HepG2 (cell line): ENCODE measurements at regions of chr17 and their contacts with region 1.

Region 1: GRCh38 chr17:8745586-8746500 is 1.2 kb upstream of the CCDC42 start:
- DNase-seq: peak; percentile 38
- ATAC-seq: peak; percentile 86
- H3K4me3 ChIP-seq: peak overlapping the region; percentile 52 to 70 (median 68); a peak in 5 of 6 replicates
- H3K27ac ChIP-seq: no peak overlapping the region
- H3K4me1 ChIP-seq: 0 out of 2 replicates have a peak, but pooled peaks cover 6% of the 10 kb centered on the region
- H3K27me3 ChIP-seq: peaks cover 1 to 30% of the 10 kb centered on the region in 2 experiments
- CTCF ChIP-seq: peak; percentile 86
- EP300 ChIP-seq: no peak
- POLR2A ChIP-seq: no peak
- RAD21 ChIP-seq: peak; percentile 91

Region 2: DNA sequence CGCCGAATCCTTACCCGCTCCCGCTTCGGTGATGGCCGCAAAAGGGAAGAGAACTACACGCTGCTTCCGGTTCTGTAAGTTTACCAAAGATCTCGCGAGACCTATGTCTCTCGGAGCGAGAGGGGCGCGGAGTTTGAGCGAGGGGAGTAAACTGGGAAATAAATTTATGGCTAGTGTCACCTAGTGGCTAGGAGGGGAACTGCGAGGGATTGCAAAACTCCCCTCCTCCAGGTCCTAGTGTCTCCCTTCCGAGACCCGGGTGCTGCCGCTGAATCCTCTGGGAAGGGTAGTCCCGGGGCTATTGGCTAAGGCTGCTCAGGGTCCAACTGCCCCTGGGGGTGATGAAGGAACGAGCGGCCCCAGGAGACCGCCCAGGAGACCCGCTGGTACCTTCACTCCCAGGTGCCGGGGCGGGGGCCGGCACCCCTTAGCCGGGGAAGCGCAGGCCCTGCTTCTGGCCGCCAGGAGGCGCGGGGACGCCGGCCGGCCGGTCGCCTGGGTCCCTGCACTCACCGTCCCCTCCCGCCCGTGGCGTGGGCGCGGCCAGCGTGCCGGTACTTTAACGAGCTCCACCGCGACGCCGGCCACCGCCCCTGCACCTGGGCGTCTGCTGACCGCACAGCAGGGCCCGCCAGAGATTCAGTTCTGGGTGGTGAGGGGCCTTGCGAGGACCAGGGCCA is 362.6 kb before region 1 on chr17 and contains the start of gene RPL26:
- CTCF ChIA-PET with region 1: interaction called, 7 read pairs
- POLR2A ChIA-PET with region 1: interaction called, 4 read pairs
- in situ Hi-C with region 1: no loop called
- intact Hi-C with region 1: loop called (anchors 2 kb)
- DNase-seq: peak; percentile 98
- ATAC-seq: peak; percentile 89
- H3K4me3 ChIP-seq: peak within 1 kb of the TSS; percentile 82 to 90 (median 87)
- H3K27ac ChIP-seq: peak within 1 kb of the TSS; percentile 64
- H3K4me1 ChIP-seq: peaks cover 53% of the 10 kb centered on the region
- H3K27me3 ChIP-seq: no peaks in the 10 kb centered on the region; a peak in 1 of 5 replicates
- CTCF ChIP-seq: peak; percentile 89
- EP300 ChIP-seq: peak in 1 of 2 experiments; percentile 28; a peak in 1 of 4 replicates
- POLR2A ChIP-seq: peak; percentile 96 to 97
- RAD21 ChIP-seq: peak; percentile 81; the same call in 1 of the 2 replicates
- total RNA-seq, gene RPL26: 2,817 and 3,645 TPM in 2 replicates

Region 3: DNA sequence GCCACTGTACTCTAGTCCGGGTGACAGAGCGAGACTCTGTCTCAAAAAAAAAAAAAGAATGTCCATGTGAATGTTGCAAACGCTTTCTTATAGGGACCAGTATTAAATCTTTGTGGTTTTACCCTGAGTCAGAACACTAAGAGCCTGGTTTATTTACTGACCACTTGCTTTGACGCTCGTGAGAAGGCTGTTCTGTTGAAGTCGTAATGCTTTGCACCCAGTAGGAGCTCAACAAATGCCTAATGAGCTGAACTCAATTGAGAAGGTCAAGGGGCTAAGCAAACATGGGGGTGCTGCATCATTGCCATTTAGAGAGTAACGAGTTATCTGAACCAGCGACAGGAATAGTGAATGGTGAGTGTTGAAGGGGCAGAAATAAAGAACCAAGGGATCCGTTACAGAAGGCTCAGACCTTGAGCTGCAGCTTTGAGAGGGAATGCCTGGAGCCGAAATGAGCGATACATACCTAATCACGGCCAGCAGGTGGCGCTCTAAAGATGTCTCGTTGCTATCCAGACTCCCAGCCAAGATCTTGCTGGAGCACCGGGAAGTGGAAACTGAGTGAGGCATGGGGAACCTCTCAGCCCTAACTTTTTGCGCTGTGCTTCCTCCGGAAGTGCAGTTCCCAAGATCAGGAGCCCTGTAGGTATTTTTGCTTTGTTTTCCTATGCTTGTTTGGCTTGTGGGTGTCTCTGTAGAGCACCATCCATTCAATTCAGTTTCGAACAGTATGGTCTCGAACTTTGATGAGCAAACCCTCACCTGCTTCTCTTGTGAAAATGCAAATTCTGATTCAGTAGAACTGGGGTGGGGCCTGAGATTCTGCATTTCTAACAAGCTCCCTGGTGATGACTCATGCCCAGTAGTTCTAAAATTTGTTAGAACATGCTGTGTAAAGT is 335.6 kb before region 1 on chr17:
- CTCF ChIA-PET with region 1: no interaction called
- POLR2A ChIA-PET with region 1: no interaction called
- in situ Hi-C with region 1: loop called (anchors 10 kb)
- intact Hi-C with region 1: no loop called
- DNase-seq: peak; percentile 80
- ATAC-seq: peak; percentile 80
- H3K4me3 ChIP-seq: peak overlapping the region in 1 of 3 experiments; percentile 30; a peak in 1 of 6 replicates
- H3K27ac ChIP-seq: no peak overlapping the region
- H3K4me1 ChIP-seq: peaks cover 64% of the 10 kb centered on the region
- H3K27me3 ChIP-seq: no peaks in the 10 kb centered on the region
- CTCF ChIP-seq: peak; percentile 94
- EP300 ChIP-seq: no peak
- POLR2A ChIP-seq: no peak
- RAD21 ChIP-seq: peak; percentile 78

Region 4: DNA sequence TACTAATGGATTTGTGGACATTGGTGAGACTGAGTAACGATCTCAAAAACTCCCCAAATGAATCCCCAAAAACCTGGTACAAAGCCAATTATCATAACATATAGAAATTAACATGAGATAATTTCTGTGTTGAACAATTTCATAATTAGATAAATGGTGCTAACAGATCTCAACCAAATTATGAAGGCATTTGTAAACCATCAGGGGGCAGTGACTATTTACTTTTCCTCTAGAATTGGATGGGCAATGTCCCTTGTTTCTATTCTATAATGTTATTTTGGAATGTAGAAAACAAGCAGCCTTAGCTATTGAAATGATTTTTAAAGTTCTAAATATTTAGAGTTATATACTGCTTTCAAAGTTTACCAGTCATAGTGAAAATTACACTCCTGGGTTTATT is 173.1 kb before region 1 on chr17:
- CTCF ChIA-PET with region 1: interaction called, 3 read pairs
- POLR2A ChIA-PET with region 1: no interaction called
- in situ Hi-C with region 1: loop called (anchors 10 kb)
- intact Hi-C with region 1: loop called (anchors 5 kb)
- DNase-seq: no peak
- ATAC-seq: no peak
- H3K4me3 ChIP-seq: no peak overlapping the region
- H3K27ac ChIP-seq: no peak overlapping the region
- H3K4me1 ChIP-seq: no peaks in the 10 kb centered on the region
- H3K27me3 ChIP-seq: no peaks in the 10 kb centered on the region
- CTCF ChIP-seq: no peak; the same call in 1 of the 2 replicates
- EP300 ChIP-seq: no peak
- POLR2A ChIP-seq: no peak
- RAD21 ChIP-seq: no peak